Activated CD4-positive, alpha-beta memory T cell treated with anti-CD3 and anti-CD28 coated beads, Interleukin-2, amount 10 ng/mL, durations not matched to agents 7 days and 5 days (primary cell): ENCODE measurements at regions of chr14 and their contacts with region 1.

Region 1: GRCh38 chr14:67674481-67675169 is at the start of gene VTI1B:
- DNase-seq: peak; percentile 77
- H3K4me3 Mint-ChIP-seq: peak within 1 kb of the TSS; percentile 80
- H3K27ac Mint-ChIP-seq: peak within 1 kb of the TSS; percentile 75
- H3K4me1 Mint-ChIP-seq: peaks cover 32% of the 10 kb centered on the region
- H3K27me3 Mint-ChIP-seq: no peaks in the 10 kb centered on the region
- total RNA-seq, gene VTI1B: 73.3 to 77.3 TPM

Region 2: GRCh38 chr14:67619446-67620216 is 55.0 kb before region 1 on chr14 and contains the start of gene ARG2:
- CTCF ChIA-PET with region 1: interaction called, 14 read pairs
- POLR2A ChIA-PET with region 1: interaction called, 3 read pairs
- DNase-seq: peak; percentile 96
- H3K4me3 Mint-ChIP-seq: peak within 1 kb of the TSS; percentile 78
- H3K27ac Mint-ChIP-seq: peak within 1 kb of the TSS; percentile 59
- H3K4me1 Mint-ChIP-seq: peaks cover 32% of the 10 kb centered on the region
- H3K27me3 Mint-ChIP-seq: peaks cover 17% of the 10 kb centered on the region
- total RNA-seq, gene ARG2: 6.8 to 7.7 TPM

Region 3: DNA sequence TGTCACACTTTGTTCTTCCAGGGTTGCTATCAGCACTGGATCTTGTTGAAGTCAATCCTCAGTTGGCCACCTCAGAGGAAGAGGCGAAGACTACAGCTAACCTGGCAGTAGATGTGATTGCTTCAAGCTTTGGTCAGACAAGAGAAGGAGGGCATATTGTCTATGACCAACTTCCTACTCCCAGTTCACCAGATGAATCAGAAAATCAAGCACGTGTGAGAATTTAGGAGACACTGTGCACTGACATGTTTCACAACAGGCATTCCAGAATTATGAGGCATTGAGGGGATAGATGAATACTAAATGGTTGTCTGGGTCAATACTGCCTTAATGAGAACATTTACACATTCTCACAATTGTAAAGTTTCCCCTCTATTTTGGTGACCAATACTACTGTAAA is 23.9 kb before region 1 on chr14:
- CTCF ChIA-PET with region 1: no interaction called
- POLR2A ChIA-PET with region 1: no interaction called
- DNase-seq: no peak
- H3K4me3 Mint-ChIP-seq: no peak overlapping the region
- H3K27ac Mint-ChIP-seq: no peak overlapping the region
- H3K4me1 Mint-ChIP-seq: peaks cover 4% of the 10 kb centered on the region
- H3K27me3 Mint-ChIP-seq: no peaks in the 10 kb centered on the region

Region 4: DNA sequence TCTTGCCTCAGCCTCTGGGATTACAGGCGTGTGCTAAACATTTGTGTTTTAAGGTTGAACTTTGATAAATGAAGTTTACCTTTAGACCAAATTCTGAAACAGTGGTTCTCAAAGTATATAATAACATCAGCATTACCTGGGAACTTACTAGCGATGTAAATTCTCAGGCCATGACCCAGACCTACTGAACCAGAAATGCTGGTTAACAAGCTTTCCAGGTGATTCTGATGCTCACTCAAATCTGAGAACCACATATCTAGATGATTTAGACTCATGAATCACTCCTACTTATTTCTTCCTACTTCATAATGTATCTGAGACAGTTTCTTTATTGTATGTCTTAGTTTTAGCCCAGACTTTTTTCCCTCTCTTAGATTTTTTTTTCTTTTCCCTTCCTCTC is 188.6 kb after region 1 on chr14:
- CTCF ChIA-PET with region 1: no interaction called
- POLR2A ChIA-PET with region 1: no interaction called
- DNase-seq: no peak
- H3K4me3 Mint-ChIP-seq: no peak overlapping the region
- H3K27ac Mint-ChIP-seq: no peak overlapping the region
- H3K4me1 Mint-ChIP-seq: peaks cover 9% of the 10 kb centered on the region
- H3K27me3 Mint-ChIP-seq: no peaks in the 10 kb centered on the region